HEK293T (cell line): ENCODE measurements at regions of chr17 and their contacts with region 1.

Region 1: DNA sequence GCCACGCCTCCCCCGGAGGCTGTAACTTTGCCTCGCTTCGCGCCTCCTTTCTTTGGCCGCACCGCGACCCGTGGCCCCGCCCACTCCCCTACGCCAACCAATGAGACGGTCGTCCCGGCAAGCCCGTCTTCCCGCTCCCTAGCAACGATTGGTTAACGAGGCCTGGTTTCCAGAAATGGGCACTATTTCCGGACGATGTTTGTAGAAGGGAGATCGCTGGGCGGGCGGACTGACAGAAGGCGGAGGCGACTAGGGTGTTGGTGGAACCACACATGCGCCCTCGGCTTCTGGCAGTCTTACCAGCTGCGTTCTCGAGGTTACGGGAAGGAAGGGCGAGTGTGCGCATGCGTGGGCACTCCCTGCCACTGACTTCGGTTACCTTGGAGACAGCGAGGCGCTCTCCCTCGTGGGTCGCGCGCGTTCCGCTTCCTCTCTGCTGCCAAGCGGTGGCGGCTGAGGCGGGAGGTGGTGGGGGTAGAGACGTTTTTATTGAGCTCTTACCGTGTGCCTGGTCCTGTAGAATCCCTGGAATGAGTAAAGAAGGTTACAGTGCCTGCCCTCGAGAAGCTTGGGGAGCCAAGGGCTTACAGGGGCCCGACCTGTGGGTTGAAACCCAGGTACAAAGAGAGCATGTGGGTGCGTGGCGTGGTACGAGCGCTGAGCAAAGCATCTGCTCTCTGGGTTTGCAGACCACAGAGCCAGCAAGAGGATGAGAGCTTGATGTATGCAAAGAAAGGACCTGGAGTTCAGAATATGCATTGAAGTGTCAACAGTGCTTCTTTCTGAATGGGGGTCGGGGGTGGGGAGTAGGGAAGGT is 500 bp upstream of the MAP3K14 start:
- DNase-seq: peak; percentile 99

Region 2: DNA sequence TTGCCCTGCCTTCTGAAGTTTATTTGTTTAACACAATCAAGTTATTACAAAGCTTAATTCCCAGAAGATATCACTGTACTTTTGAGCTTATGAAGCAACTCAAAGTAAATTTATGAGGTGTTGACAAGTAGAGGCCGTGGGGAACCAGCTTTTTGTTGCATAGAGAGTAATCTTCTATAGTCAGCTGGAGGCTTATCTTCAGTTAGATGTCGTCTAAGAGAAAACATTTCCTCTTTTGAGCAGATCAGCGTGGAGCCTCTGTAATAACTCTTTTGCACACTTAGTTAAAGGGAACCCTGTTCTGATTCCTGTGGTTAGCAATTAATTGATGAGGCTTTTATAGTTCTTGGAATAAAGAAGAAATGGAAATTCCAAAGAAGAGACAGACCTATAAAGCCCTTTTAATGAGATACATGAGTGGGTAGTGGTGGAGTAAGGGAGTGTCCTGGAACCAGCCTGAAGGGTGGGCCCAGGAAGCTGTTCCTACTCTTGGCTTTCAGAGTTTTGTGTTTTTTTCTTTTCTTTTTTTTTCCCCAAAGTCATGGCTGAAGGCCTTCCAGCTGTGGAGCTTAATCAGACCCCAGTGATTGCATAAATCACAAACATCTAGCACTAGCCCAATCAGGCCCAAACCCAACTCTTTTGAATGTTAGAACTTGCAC is 28.4 kb after region 1 on chr17:
- CTCF ChIA-PET with region 1: interaction called, 3 read pairs
- POLR2A ChIA-PET with region 1: interaction called, 16 read pairs
- DNase-seq: peak; percentile 39

Region 3: DNA sequence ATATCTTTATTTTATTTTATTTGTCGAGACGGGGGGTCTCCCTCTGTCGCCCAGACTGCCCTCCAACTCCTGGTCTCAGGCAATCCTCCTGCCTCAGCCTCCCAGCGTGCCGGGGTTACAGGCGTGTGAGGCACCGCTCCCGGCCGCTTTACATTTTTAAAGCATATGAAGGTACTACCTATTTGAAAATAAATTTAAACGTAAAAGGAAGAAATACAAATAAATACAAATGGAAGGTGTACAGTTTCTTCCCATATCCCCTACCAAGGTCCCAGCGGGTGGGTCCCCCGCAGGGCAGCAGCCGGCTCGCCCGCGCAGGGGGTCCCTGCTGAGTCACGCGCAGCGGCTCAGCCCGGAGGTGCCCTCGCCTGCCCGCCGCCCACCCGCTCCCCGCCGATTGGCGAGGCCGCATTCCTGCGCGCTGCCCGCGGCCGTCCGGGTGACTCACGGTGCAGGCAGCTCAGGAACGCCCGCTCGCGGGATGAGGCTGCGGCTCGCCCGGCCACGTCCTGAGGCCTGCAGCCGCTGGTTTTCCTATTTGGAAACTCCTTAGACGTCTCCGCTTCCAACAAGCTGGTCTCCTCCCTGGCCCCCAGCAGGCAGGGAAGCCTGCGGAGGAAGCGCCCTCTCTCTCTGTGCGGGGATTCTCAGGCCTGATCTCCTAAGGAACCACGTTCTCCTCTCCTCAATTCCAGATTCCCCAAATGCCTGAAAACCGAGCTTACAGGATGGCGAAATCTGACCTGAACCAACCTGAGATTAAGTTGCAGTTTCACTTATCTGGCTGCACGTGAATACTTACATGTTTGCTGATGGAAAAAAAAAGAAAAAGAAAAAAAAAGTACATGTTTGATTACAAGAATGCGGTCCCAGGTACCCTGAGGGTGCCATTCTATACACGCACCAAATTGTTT is 54.4 kb after region 1 on chr17:
- CTCF ChIA-PET with region 1: interaction called, 7 read pairs
- POLR2A ChIA-PET with region 1: interaction called, 23 read pairs
- DNase-seq: peak; percentile 82